Heart right ventricle (tissue), 16 donors: ENCODE measurements at regions of chr14 and their contacts with region 1.

Region 1: DNA sequence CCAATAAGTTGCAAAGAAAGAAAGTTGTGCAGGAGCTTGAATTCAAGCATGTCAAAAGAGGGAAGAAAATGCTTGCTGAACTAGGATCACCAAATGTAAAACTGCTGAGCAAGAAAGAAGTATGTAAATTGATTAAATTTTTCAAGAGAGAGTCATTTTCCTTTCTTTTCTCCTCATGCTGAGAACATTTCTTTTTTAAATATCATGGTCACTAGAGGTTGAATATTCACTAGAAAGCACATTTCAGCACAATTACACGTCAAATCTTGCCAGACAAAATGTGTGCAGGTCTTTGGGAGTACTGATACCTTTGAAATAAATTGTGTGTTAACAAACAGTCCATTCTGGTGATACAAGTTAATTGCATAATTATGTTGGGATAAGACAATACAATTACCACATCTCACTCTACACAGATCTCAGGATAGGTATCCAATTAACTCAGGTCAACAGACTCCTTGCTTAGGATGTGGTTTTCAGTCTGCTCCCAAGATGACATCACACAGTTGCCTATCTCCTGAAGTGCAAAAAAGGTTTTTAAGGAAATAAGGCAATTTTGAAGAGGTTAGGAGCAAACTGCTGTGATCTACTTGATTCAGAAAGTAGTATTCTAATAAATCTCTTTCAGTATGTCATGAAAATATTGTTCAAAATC is 862.2 kb downstream of the RPS29 start:
- DNase-seq: no peak
- ATAC-seq: no peak
- H3K4me3 ChIP-seq: no peak overlapping the region
- H3K27ac ChIP-seq: no peak overlapping the region
- H3K4me1 ChIP-seq: peaks cover 0 to 13% (median 0%) of the 10 kb centered on the region in 9 donors
- H3K27me3 ChIP-seq: no peaks in the 10 kb centered on the region
- CTCF ChIP-seq: no peak

Region 2: DNA sequence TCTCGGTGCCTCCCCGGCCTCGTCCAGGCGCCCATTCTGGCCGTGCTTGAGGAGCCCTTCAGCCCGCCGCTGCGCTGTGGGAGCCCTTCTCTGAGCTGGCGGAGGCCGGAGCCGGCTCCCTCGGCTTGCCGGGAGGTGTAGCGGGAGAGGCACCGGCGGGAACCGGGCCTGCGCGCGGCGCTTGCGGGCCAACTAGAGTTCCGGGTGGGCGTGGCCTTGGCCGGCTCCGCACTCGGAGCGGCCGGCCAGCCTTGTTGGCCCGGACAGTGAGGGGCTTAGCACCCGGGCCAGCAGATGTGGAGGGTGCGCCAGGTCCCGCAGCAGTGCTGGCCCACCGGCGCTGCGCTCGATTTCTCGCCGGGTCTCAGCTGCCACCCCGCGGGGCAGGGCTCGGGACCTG is 1903.7 kb before region 1 on chr14:
- intact Hi-C with region 1: loop called in 1 of 10 experiments (anchors 5 kb)
- DNase-seq: no peak
- ATAC-seq: no peak
- H3K4me3 ChIP-seq: no peak overlapping the region
- H3K27ac ChIP-seq: no peak overlapping the region
- H3K4me1 ChIP-seq: no peaks in the 10 kb centered on the region
- H3K27me3 ChIP-seq: no peaks in the 10 kb centered on the region
- CTCF ChIP-seq: no peak

Region 3: GRCh38 chr14:48575772-48576171 is 148.2 kb before region 1 on chr14:
- intact Hi-C with region 1: no loop called
- DNase-seq: no peak
- ATAC-seq: no peak
- H3K4me3 ChIP-seq: no peak overlapping the region
- H3K27ac ChIP-seq: no peak overlapping the region
- H3K4me1 ChIP-seq: no peaks in the 10 kb centered on the region
- H3K27me3 ChIP-seq: no peaks in the 10 kb centered on the region
- CTCF ChIP-seq: no peak

Region 4: DNA sequence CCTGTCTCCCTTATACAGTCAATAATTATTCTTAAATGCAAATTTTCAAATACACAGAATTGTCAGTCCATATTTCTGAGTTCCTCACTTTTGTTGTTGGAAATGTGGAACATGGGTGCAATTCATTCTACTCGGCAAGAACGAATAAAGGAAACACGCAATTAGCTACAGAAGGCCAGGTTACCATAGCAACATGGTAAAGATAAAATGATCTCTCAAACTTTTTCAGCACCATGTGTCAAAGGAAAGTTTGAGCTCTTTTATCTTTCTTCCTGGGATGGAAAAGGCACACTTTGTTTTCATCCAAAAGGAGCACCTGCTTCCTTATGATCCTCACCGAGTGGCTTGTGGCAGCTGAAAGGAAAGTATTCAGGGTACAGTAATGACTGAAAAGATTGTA is 267.2 kb after region 1 on chr14:
- intact Hi-C with region 1: no loop called
- DNase-seq: no peak
- ATAC-seq: no peak
- H3K4me3 ChIP-seq: no peak overlapping the region
- H3K27ac ChIP-seq: no peak overlapping the region
- H3K4me1 ChIP-seq: no peaks in the 10 kb centered on the region
- H3K27me3 ChIP-seq: no peaks in the 10 kb centered on the region
- CTCF ChIP-seq: no peak